Esophagus muscularis mucosa (tissue), 4 donors: ENCODE measurements at regions of chr9 and their contacts with region 1.

Region 1: DNA sequence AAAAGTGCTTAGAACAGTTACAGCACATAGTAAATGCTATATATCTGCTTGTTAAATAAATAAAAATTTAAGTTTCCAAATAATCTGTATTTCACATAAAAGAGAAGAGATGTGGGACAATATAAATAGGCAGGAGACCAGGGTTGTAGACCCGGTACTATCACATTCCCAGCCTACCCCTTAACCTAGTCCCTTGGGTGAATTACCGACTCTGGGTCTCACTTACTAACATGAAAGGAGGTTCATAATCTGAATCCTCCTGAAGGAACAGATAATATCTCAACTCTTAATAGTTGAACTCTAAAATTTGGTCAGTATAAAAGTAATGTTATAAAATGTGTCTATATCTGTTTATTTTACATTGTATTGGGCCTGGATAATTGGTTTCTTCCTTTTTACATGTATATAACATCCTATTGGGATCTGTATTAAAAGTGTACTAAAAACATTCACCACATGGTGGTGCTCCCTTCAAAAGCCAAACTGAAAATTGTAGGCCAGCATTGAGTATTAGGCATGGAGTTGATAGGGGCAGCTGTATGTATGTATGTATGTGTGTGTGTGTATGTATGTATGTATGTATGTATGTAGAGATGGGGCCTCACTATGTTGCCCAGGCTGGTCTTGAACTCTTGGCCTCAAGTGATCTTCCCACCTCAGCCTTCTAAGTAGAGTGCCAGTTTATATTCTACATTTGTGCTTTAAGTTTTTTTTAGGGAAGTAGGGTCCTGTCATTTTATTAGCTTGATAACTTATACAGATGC is 64.2 kb upstream of the ABL1 start:
- DNase-seq: no peak
- H3K4me3 ChIP-seq: no peak overlapping the region
- H3K27ac ChIP-seq: no peak overlapping the region
- H3K4me1 ChIP-seq: peaks cover 14 to 55% (median 39%) of the 10 kb centered on the region in 4 donors
- H3K27me3 ChIP-seq: no peaks in the 10 kb centered on the region
- CTCF ChIP-seq: peak; percentile 62 to 77 (median 73)
- EP300 ChIP-seq: no peak
- POLR2A ChIP-seq: no peak

Region 2: GRCh38 chr9:130701056-130702022 is 69.5 kb before region 1 on chr9:
- intact Hi-C with region 1: loop called (anchors 5 kb)
- DNase-seq: no peak
- H3K4me3 ChIP-seq: no peak overlapping the region
- H3K27ac ChIP-seq: peak overlapping the region; percentile 50 to 71 (median 67)
- H3K4me1 ChIP-seq: peaks cover 16 to 33% (median 30%) of the 10 kb centered on the region in 4 donors
- H3K27me3 ChIP-seq: no peaks in the 10 kb centered on the region
- CTCF ChIP-seq: peak; percentile 94 to 95 (median 95)
- EP300 ChIP-seq: no peak
- POLR2A ChIP-seq: no peak